K562 (cell line): ENCODE measurements at regions of chr10 and their contacts with region 1.

Region 1: GRCh38 chr10:11573497-11573896 is 38.0 kb downstream of the USP6NL start:
- DNase-seq: no peak
- ATAC-seq: peak; percentile 45
- H3K4me3 ChIP-seq: no peak overlapping the region
- H3K27ac ChIP-seq: no peak overlapping the region
- H3K4me1 ChIP-seq: peaks cover 0 to 6% of the 10 kb centered on the region in 2 experiments; a peak in 2 of 5 replicates
- H3K27me3 ChIP-seq: no peaks in the 10 kb centered on the region
- CTCF ChIP-seq: no peak
- EP300 ChIP-seq: no peak
- POLR2A ChIP-seq: no peak
- RAD21 ChIP-seq: no peak

Region 2: GRCh38 chr10:11586170-11586569 is 12.7 kb after region 1 on chr10:
- CTCF ChIA-PET with region 1: no interaction called
- POLR2A ChIA-PET with region 1: interaction called, 21 read pairs
- in situ Hi-C with region 1: no loop called
- intact Hi-C with region 1: no loop called
- DNase-seq: no peak
- ATAC-seq: no peak
- H3K4me3 ChIP-seq: no peak overlapping the region
- H3K27ac ChIP-seq: peak overlapping the region; percentile 38; the same call in 1 of the 3 replicates
- H3K4me1 ChIP-seq: peaks cover 7 to 36% of the 10 kb centered on the region in 2 experiments
- H3K27me3 ChIP-seq: no peaks in the 10 kb centered on the region
- CTCF ChIP-seq: no peak
- EP300 ChIP-seq: no peak
- POLR2A ChIP-seq: no peak
- RAD21 ChIP-seq: no peak

Region 3: GRCh38 chr10:12322583-12323131 is 749.2 kb after region 1 on chr10:
- CTCF ChIA-PET with region 1: no interaction called
- POLR2A ChIA-PET with region 1: no interaction called
- in situ Hi-C with region 1: no loop called
- intact Hi-C with region 1: no loop called
- DNase-seq: no peak
- ATAC-seq: no peak
- H3K4me3 ChIP-seq: no peak overlapping the region
- H3K27ac ChIP-seq: no peak overlapping the region
- H3K4me1 ChIP-seq: no peaks in the 10 kb centered on the region; a peak in 1 of 5 replicates
- H3K27me3 ChIP-seq: peaks cover 9 to 23% of the 10 kb centered on the region in 2 experiments; a peak in 4 of 5 replicates
- CTCF ChIP-seq: no peak
- EP300 ChIP-seq: no peak
- POLR2A ChIP-seq: no peak
- RAD21 ChIP-seq: no peak